ENCODE measurements at regions of chr7 and their contacts with region 1.

Region 1: DNA sequence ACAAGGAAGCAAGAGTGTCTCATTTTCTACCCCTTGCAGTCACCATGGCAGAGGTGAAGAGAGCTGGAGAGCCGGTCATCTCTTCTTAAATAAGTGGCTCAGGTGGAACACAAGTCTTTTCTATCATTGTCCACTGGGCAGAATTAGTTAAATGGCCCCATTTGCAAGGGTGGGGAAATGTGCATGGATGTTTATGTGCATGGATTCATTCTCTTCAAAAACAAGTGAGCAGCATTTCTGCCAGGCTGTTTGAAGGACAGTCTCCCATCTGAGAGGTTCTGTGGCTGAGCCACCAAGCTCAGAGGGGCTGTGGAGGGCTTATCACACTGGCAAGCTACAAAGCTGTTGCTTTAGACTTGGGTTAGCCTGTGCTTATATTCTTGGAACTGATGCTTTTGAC is 370.3 kb upstream of the MTPN start:
- DNase-seq: no peak

Region 2: GRCh38 chr7:136389933-136390332 is 42.4 kb after region 1 on chr7:
- intact Hi-C with region 1: loop called in 1 of 2 experiments (anchors 1 kb)
- DNase-seq: no peak

Measured in posterior vena cava (tissue), 2 donors.